ENCODE measurements at regions of chr10 and their contacts with region 1.

Region 1: GRCh38 chr10:87817609-87818504 is at the start of gene ATAD1:
- DNase-seq: peak; percentile 88 to 89
- ATAC-seq: peak; percentile 94
- total RNA-seq, gene ATAD1: 50.5 to 51.0 TPM

Region 2: GRCh38 chr10:87861953-87862678 is 44.3 kb after region 1 on chr10:
- intact Hi-C with region 1: loop called in 1 of 2 experiments (anchors 5 kb)
- DNase-seq: peak; percentile 98 to 99
- ATAC-seq: peak; percentile 76

Measured in left colon (tissue), 2 donors.